A673 (cell line): ENCODE measurements at regions of chr1 and their contacts with region 1.

Region 1: GRCh38 chr1:32151319-32151787 is 28.1 kb upstream of the TXLNA start:
- DNase-seq: peak; percentile 93
- H3K4me3 ChIP-seq: peak overlapping the region; percentile 23
- H3K27ac ChIP-seq: peak overlapping the region; percentile 52
- H3K4me1 ChIP-seq: peaks cover 28% of the 10 kb centered on the region
- H3K27me3 ChIP-seq: no peaks in the 10 kb centered on the region
- CTCF ChIP-seq: no peak

Region 2: DNA sequence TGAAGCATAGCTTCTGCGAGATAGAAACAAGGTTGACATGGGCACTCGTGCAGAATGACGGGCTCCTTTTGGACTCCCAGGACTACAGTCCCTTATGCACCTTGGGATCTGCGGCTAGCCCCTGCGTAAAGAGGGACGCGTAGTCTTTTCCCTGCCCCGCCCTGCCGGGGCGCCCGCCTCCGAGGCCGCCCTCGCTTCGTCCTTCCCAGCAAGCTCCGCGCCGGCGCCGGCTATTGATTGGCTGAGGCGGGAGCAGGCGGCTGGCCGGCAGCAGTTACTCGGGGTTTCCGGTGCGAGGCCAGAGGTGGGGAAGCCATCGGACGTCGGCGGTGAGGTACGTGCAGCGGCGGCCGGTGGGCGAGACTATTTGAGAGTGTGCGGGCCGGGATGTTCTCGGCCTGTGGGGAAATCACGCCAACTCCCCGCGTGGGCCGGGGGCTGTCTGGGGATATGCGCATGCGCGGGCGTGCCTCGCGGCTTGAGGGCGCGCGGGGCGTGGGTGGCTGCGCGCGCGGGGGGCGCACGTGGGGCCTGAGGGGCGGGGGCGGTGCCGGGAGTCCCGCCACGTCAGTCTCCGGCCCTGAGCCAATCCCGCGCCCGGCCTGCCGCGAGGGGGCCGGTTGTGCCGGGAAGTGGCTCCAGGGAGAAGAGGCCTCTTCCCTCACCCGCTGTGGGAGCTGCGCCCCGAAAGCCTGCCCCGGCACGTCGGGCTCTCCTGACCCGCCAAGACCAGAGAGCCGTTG is 28.3 kb after region 1 on chr1 and contains the start of gene TXLNA:
- CTCF ChIA-PET with region 1: interaction called, 3 read pairs
- POLR2A ChIA-PET with region 1: interaction called, 12 read pairs
- intact Hi-C with region 1: no loop called
- DNase-seq: peak; percentile 90
- H3K4me3 ChIP-seq: peak within 1 kb of the TSS; percentile 52
- H3K27ac ChIP-seq: peak within 1 kb of the TSS; percentile 94
- H3K4me1 ChIP-seq: peaks cover 14% of the 10 kb centered on the region
- H3K27me3 ChIP-seq: no peaks in the 10 kb centered on the region
- CTCF ChIP-seq: no peak
- total RNA-seq, gene TXLNA: 62.3 and 62.7 TPM in 2 replicates

Region 3: GRCh38 chr1:32377541-32378220 is 226.3 kb after region 1 on chr1:
- CTCF ChIA-PET with region 1: no interaction called
- POLR2A ChIA-PET with region 1: interaction called, 10 read pairs
- intact Hi-C with region 1: no loop called
- DNase-seq: no peak
- H3K4me3 ChIP-seq: no peak overlapping the region
- H3K27ac ChIP-seq: no peak overlapping the region
- H3K4me1 ChIP-seq: no peaks in the 10 kb centered on the region
- H3K27me3 ChIP-seq: no peaks in the 10 kb centered on the region
- CTCF ChIP-seq: no peak